CD8-positive, alpha-beta T cell (primary cell): ENCODE measurements at regions of chr7 and their contacts with region 1.

Region 1: DNA sequence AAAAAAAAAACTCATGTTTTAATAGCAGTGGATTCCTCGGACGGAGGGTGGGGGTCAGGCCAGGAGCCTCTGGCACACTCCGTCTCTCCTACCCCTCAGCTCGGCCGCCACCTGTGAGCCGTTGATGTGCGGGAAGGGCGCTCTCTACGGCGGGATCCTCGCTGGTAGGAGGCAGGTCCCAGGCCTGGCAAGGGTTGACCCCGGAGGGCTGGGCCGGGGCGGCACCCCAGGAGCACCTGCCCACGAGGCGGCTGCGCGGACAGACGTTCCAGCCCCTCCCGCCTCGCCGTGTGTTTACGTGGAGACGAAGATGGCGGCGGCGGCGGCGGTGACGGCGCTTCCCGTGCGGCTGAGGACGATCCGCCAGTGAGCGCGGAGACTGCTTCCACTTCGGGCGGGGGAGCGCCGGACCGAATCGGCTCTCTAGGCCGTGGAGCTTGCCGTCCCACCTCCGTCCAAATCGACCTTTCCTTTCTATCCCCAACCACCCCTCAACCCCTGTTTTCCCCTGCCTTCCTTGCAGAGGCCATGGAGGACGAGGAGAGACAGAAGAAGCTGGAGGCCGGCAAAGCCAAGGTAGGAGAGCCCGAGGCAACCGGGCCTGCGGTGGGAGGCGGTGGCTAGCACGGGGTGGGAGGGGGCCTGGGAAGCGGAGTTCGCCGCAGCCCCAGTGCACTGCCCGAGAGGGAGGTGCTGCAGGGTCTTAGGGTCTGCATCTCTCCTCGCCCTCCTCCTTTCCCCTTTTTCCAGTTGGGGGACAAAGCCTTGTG is at the start of gene AKAP9:
- DNase-seq: peak; percentile 71 to 93 (median 89)
- ATAC-seq: peak; percentile 84
- H3K4me3 ChIP-seq: peak within 1 kb of the TSS; percentile 78 to 92
- H3K4me3 Mint-ChIP-seq: peak within 1 kb of the TSS; percentile 93
- H3K27ac ChIP-seq: peak within 1 kb of the TSS; percentile 91 to 93
- H3K27ac Mint-ChIP-seq: peak within 1 kb of the TSS; percentile 96
- H3K4me1 ChIP-seq: peaks cover 21% of the 10 kb centered on the region
- H3K4me1 Mint-ChIP-seq: peaks cover 45% of the 10 kb centered on the region
- H3K27me3 ChIP-seq: no peaks in the 10 kb centered on the region
- H3K27me3 Mint-ChIP-seq: no peaks in the 10 kb centered on the region
- CTCF ChIP-seq: no peak
- total RNA-seq, gene AKAP9: 61.2 to 61.3 TPM

Region 2: DNA sequence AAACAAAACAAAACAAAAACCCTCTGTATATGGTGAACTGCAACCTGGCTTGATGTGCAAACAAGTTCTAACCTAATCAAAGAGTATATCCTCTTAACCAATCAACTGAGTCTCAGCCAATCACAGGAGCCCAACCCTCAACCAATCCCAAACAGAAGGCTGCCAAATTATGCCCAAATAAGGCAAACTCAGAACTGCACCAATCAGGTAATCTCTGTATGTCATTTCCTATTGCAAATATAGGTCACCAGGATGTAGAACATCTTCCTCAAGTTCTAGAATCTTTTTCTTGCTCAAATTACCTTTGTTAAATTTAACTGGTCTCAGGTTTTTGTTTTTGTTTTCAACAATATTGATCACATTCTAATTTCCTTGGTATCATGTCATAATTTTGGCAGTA is 644.2 kb after region 1 on chr7:
- CTCF ChIA-PET with region 1: no interaction called
- POLR2A ChIA-PET with region 1: no interaction called
- intact Hi-C with region 1: loop called (anchors 1 to 10 kb)
- DNase-seq: peak in 2 of 9 experiments; percentile 28 to 53
- ATAC-seq: peak; percentile 21
- H3K4me3 ChIP-seq: no peak overlapping the region
- H3K4me3 Mint-ChIP-seq: peak overlapping the region; percentile 37
- H3K27ac ChIP-seq: peak overlapping the region in 1 of 2 experiments; percentile 13
- H3K27ac Mint-ChIP-seq: peak overlapping the region; percentile 89
- H3K4me1 ChIP-seq: peaks cover 40% of the 10 kb centered on the region
- H3K4me1 Mint-ChIP-seq: peaks cover 80% of the 10 kb centered on the region
- H3K27me3 ChIP-seq: no peaks in the 10 kb centered on the region
- H3K27me3 Mint-ChIP-seq: no peaks in the 10 kb centered on the region
- CTCF ChIP-seq: no peak